ENCODE measurements at regions of chr1 and their contacts with region 1.

Region 1: DNA sequence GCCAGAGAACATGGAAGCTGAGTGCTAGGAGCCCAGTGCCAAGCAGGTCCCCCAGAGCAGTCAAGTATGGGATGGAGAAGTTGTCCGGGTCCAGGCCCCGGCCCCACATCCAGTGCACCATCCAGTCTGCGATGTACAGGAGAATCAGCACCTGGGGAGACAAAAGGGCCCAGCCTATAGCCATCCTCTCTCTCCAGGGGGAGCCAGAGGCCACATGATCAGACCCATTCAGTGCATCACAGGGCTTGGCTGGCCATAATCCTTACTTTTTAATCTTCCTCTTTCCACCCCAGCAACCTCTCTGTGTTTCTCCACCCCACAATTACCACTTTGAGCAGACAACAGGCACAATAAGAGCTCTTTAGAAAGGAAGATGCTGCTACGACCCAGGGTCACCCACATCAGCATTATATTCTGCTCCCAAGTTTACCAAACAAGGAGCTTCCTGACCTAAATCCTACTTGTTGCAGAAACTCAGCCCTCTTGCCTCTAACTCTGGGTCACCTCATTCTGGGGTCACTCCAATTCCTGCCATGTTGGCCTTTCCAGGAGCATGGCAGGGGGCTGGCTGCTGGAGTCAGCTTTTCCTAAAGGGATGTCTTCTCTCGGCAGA is 16.4 kb upstream of the RAB29 start:
- DNase-seq: peak; percentile 88
- H3K27ac ChIP-seq: no peak overlapping the region
- CTCF ChIP-seq: peak; percentile 75

Region 2: GRCh38 chr1:205805082-205805712 is 13.5 kb after region 1 on chr1:
- CTCF ChIA-PET with region 1: interaction called, 16 read pairs
- POLR2A ChIA-PET with region 1: no interaction called
- DNase-seq: no peak
- H3K27ac ChIP-seq: no peak overlapping the region
- CTCF ChIP-seq: no peak

Region 3: GRCh38 chr1:205812878-205813754 is 21.4 kb after region 1 on chr1 and contains the start of gene SLC41A1:
- CTCF ChIA-PET with region 1: interaction called, 16 read pairs
- POLR2A ChIA-PET with region 1: no interaction called
- DNase-seq: peak; percentile 100
- H3K27ac ChIP-seq: peak within 1 kb of the TSS; percentile 76
- CTCF ChIP-seq: no peak

Region 4: GRCh38 chr1:205843036-205843859 is 51.6 kb after region 1 on chr1:
- CTCF ChIA-PET with region 1: no interaction called
- POLR2A ChIA-PET with region 1: no interaction called
- DNase-seq: no peak
- H3K27ac ChIP-seq: no peak overlapping the region
- CTCF ChIP-seq: no peak

Region 5: DNA sequence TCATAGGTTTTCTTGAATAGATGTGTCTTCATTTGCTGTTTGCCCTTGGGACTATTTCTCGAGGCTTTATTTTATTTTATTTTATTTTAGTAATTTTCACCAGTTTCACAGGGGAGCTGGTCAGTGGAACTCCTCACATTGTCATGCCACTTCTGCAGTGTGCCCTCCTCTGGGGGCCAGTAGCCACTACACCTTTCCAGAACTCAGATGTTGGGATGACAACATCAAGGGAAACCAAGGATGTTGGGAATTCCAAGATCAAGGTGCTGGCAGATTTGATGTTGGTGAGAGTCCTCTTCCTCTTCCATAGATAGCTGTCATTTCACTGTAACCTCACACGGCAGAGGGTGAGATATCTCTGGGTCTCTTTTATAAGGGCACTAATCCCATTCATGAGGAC is 116.1 kb after region 1 on chr1:
- CTCF ChIA-PET with region 1: interaction called, 37 read pairs
- POLR2A ChIA-PET with region 1: interaction called, 3 read pairs
- DNase-seq: peak; percentile 52
- H3K27ac ChIP-seq: no peak overlapping the region
- CTCF ChIP-seq: no peak; the same call in 1 of the 2 replicates

Region 6: GRCh38 chr1:206041640-206042039 is 250.0 kb after region 1 on chr1:
- CTCF ChIA-PET with region 1: no interaction called
- POLR2A ChIA-PET with region 1: no interaction called
- DNase-seq: peak; percentile 59
- H3K27ac ChIP-seq: peak overlapping the region; percentile 32; the same call in 1 of the 2 replicates
- CTCF ChIP-seq: no peak

Region 7: GRCh38 chr1:206106328-206107167 is 314.9 kb after region 1 on chr1:
- CTCF ChIA-PET with region 1: interaction called, 11 read pairs
- POLR2A ChIA-PET with region 1: no interaction called
- DNase-seq: peak; percentile 92
- H3K27ac ChIP-seq: no peak overlapping the region
- CTCF ChIP-seq: peak; percentile 86